ENCODE measurements at regions of chr3 and their contacts with region 1.

Region 1: GRCh38 chr3:149273096-149273751 is 51.6 kb upstream of the CP start:
- DNase-seq: no peak
- ATAC-seq: peak; percentile 88
- H3K4me3 Mint-ChIP-seq: no peak overlapping the region
- H3K27ac Mint-ChIP-seq: no peak overlapping the region
- H3K4me1 Mint-ChIP-seq: peaks cover 19% of the 10 kb centered on the region
- H3K27me3 Mint-ChIP-seq: no peaks in the 10 kb centered on the region
- CTCF ChIP-seq: peak; percentile 92

Region 2: GRCh38 chr3:148955544-148956346 is 317.5 kb before region 1 on chr3:
- CTCF ChIA-PET with region 1: interaction called, 5 read pairs
- POLR2A ChIA-PET with region 1: no interaction called
- intact Hi-C with region 1: loop called (anchors 1 kb)
- DNase-seq: no peak
- ATAC-seq: no peak
- H3K4me3 Mint-ChIP-seq: no peak overlapping the region
- H3K27ac Mint-ChIP-seq: no peak overlapping the region
- H3K4me1 Mint-ChIP-seq: no peaks in the 10 kb centered on the region
- H3K27me3 Mint-ChIP-seq: peaks cover 7% of the 10 kb centered on the region
- CTCF ChIP-seq: no peak

Region 3: GRCh38 chr3:149830902-149831301 is 557.7 kb after region 1 on chr3:
- CTCF ChIA-PET with region 1: no interaction called
- POLR2A ChIA-PET with region 1: no interaction called
- intact Hi-C with region 1: no loop called
- DNase-seq: no peak
- ATAC-seq: no peak
- H3K4me3 Mint-ChIP-seq: no peak overlapping the region
- H3K27ac Mint-ChIP-seq: no peak overlapping the region
- H3K4me1 Mint-ChIP-seq: peaks cover 9% of the 10 kb centered on the region
- H3K27me3 Mint-ChIP-seq: no peaks in the 10 kb centered on the region
- CTCF ChIP-seq: no peak

Measured in activated B cell treated with CpG ODN at 0.5 μM for 24 hours (primary cell).